ENCODE measurements at regions of chr15 and their contacts with region 1.

Region 1: DNA sequence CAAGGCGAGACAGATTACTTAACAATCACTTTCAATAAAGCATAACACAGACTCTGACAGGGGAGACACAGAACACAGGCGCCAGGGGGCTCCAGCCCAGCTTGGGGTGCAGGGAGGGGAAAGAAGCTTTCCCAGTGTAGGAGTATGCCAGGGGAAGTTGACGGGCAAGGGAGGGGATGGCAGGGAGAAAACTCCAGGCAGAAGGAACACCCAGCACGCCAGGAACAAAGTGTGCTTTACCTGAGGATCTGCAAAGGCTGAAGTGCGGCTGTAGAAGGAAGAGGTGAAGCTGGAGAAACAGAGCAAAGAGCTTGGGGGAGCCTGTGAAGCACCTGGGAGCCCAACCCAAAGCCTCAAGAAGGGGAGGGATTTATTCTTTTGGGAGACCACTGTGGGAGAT is 12.1 kb downstream of the RGMA start:
- DNase-seq: no peak
- ATAC-seq: no peak
- H3K4me3 ChIP-seq: no peak overlapping the region
- H3K27ac ChIP-seq: no peak overlapping the region
- H3K4me1 ChIP-seq: peaks cover 5 to 16% of the 10 kb centered on the region in 2 experiments
- H3K27me3 ChIP-seq: peaks cover 29% of the 10 kb centered on the region
- CTCF ChIP-seq: no peak
- POLR2A ChIP-seq: no peak
- RAD21 ChIP-seq: no peak

Region 2: DNA sequence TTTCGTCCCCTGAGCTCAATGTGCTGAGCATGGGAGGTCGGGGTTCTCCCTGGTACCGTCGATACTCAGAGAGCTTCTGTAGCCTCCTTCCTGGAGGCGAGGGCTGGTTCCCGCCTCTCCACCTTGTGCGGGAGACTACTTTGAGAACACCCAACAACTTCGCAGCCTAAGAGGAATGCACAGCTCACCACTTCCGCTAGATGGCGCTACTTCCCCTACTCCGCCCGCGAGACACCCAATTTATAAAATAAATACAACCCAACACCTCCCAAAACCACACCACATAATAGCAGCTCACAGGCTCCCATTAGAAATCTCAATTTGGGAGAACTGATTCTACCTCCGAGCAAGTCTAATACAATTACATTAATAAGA is 10.9 kb after region 1 on chr15:
- CTCF ChIA-PET with region 1: interaction called, 10 read pairs
- POLR2A ChIA-PET with region 1: no interaction called
- RAD21 ChIA-PET with region 1: no interaction called
- intact Hi-C with region 1: no loop called
- DNase-seq: peak; percentile 22
- ATAC-seq: peak; percentile 93
- H3K4me3 ChIP-seq: no peak overlapping the region
- H3K27ac ChIP-seq: no peak overlapping the region
- H3K4me1 ChIP-seq: peaks cover 0 to 5% of the 10 kb centered on the region in 2 experiments; a peak in 1 of 4 replicates
- H3K27me3 ChIP-seq: peaks cover 40% of the 10 kb centered on the region
- CTCF ChIP-seq: peak; percentile 63 to 89 (median 87); a peak in 5 of 6 replicates
- POLR2A ChIP-seq: no peak
- RAD21 ChIP-seq: peak; percentile 77

Region 3: GRCh38 chr15:93179072-93179471 is 102.2 kb after region 1 on chr15:
- CTCF ChIA-PET with region 1: no interaction called
- POLR2A ChIA-PET with region 1: no interaction called
- RAD21 ChIA-PET with region 1: no interaction called
- intact Hi-C with region 1: no loop called
- DNase-seq: no peak
- ATAC-seq: no peak
- H3K4me3 ChIP-seq: no peak overlapping the region
- H3K27ac ChIP-seq: no peak overlapping the region
- H3K4me1 ChIP-seq: no peaks in the 10 kb centered on the region
- H3K27me3 ChIP-seq: no peaks in the 10 kb centered on the region
- CTCF ChIP-seq: no peak
- POLR2A ChIP-seq: no peak
- RAD21 ChIP-seq: no peak

Measured in HCT116 (cell line).